ENCODE measurements at regions of chr6 and their contacts with region 1.

Region 1: GRCh38 chr6:53359072-53359842 is 10.5 kb upstream of the ELOVL5 start:
- DNase-seq: peak; percentile 99

Region 2: GRCh38 chr6:51830666-51831065 is 1528.6 kb before region 1 on chr6:
- intact Hi-C with region 1: no loop called
- DNase-seq: no peak

Region 3: GRCh38 chr6:52635049-52635577 is 724.1 kb before region 1 on chr6:
- intact Hi-C with region 1: loop called in 1 of 2 experiments (anchors 5 kb)
- DNase-seq: no peak

Region 4: GRCh38 chr6:53484476-53485280 is 125.4 kb after region 1 on chr6:
- intact Hi-C with region 1: loop called in 1 of 2 experiments (anchors 10 kb)
- DNase-seq: no peak